Panc1 (cell line): ENCODE measurements at regions of chr5 and their contacts with region 1.

Region 1: DNA sequence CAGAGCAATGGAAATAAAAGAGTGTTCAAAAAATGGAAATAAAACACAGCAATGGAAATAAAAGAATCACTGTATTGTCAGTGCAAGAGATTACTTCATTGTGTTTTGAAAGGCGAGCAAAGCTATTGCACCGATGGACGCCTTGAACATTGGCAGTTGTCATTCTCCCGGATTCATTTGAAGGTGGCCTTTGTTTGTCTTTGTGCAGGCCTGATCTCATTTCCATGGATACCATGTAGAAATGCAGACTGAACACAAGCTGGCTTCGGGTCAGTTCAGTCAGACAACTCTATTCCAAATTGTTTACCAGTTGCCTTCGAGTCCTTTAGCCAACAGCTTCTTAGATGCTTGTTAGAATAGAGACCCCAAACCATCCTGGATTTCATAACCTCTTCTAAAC is 8.3 kb downstream of the ITGA2 start:
- DNase-seq: no peak
- ATAC-seq: peak; percentile 58; the same call in 1 of the 2 replicates
- H3K4me3 ChIP-seq: peak overlapping the region in 1 of 2 experiments; percentile 16; a peak in 1 of 4 replicates
- H3K27ac ChIP-seq: peak overlapping the region; percentile 67
- H3K4me1 ChIP-seq: peaks cover 38% of the 10 kb centered on the region
- H3K27me3 ChIP-seq: no peaks in the 10 kb centered on the region
- CTCF ChIP-seq: no peak

Region 2: DNA sequence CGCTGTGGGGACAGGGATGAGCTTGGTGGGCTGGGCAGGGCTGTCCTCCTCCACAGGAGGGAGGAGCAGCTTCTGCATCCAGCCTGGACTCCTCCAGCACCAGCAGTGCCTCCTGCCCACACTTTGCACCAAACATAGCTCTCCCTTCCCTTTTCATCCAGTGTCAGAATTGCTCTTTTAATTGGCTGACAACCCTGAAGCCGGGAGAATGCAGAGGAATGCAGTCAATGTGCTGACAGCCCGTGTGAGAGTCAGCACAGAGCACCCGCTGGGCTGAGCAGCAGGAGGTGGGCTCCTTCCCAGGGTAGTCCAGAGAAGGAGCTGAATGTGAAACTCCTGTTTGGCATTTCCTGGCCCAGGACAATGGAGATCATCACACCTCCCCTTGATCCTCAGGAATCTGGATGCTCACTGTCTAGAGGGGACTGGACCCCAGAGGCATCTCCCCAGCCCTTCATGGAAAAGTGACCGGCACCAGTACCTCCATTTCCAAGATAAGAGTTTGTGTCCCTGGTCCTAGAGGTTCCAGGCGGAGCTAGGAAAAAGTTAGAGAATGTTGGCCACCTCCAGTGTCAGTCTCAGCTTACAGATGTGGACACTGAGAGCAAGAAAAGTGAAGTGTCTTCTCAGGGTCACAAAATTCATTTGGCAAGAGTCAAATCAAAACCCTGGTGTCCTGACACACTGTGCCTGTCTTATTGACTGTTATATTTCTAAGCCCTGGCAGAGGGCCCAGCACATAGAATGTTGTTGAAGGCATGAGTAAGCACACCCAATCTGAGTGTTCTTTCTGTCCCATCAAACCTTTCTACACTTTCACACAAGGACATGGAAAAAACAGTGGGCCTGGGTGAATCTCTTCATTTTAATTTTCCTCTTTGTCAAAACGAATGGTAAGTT is 1722.2 kb after region 1 on chr5:
- CTCF ChIA-PET with region 1: no interaction called
- POLR2A ChIA-PET with region 1: interaction called, 12 read pairs
- in situ Hi-C with region 1: no loop called
- intact Hi-C with region 1: no loop called
- DNase-seq: no peak
- ATAC-seq: no peak; the same call in 1 of the 2 replicates
- H3K4me3 ChIP-seq: no peak overlapping the region
- H3K27ac ChIP-seq: no peak overlapping the region
- H3K4me1 ChIP-seq: no peaks in the 10 kb centered on the region
- H3K27me3 ChIP-seq: no peaks in the 10 kb centered on the region
- CTCF ChIP-seq: no peak